A549 (cell line): ENCODE measurements at regions of chr19 and their contacts with region 1.

Region 1: DNA sequence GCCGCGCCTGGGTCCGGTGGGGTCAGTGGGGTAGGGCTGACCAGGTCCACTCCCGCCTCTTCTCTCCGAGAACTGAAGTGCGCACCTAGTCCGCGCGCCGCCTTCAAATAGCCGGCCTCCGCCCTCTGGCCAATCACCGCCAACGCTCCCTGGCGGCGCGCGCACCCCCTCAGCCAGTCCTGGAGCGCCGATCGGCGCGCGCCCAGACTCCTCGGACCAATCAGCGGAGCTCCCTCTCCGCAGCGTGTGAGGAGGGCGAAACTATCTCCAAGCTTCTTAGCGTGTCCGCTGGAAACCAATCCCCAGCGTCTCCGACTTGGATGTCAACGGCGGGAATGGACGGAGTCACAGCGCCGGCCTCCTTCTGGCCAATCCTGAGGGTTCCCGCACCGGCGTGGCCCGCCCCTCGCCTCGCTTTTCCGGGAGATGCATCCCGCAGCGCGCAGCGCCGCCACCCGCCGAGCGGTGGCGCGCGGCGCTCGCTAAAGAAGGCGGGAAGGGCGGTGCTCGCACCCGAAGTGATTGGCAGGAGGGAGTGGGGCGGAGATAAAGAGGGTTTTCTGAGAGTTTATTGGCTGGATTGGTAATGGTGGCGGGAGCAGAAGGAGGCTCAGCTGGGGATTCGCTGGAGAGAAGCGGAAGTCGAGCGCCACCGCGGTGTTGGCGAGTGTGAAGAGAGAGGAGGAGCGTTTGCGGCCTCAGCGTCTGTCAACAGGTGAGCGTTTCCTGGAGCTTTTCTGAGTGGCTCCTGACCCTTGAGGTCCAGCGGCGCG is at the start of gene ASF1B:
- DNase-seq: peak; percentile 94 to 99
- ATAC-seq: peak; percentile 94 to 95
- H3K4me3 ChIP-seq: peak within 1 kb of the TSS; percentile 62
- H3K27ac ChIP-seq: peak within 1 kb of the TSS; percentile 75 to 93
- H3K4me1 ChIP-seq: peaks cover 11% of the 10 kb centered on the region; the same call in 2 of the 3 replicates
- CTCF ChIP-seq: peak; percentile 63
- EP300 ChIP-seq: no peak
- POLR2A ChIP-seq: peak; percentile 81
- RAD21 ChIP-seq: peak; percentile 54 to 81
- polyA plus RNA-seq, gene ASF1B: 12.1 and 17.1 TPM in 2 replicates

Region 2: GRCh38 chr19:13917888-13918406 is 218.7 kb before region 1 on chr19:
- CTCF ChIA-PET with region 1: no interaction called
- POLR2A ChIA-PET with region 1: no interaction called
- DNase-seq: no peak
- ATAC-seq: no peak
- H3K4me3 ChIP-seq: no peak overlapping the region
- H3K27ac ChIP-seq: no peak overlapping the region
- H3K4me1 ChIP-seq: no peaks in the 10 kb centered on the region
- CTCF ChIP-seq: no peak
- EP300 ChIP-seq: no peak
- POLR2A ChIP-seq: no peak
- RAD21 ChIP-seq: no peak

Region 3: GRCh38 chr19:14118165-14119051 is 18.3 kb before region 1 on chr19:
- CTCF ChIA-PET with region 1: interaction called, 18 read pairs
- POLR2A ChIA-PET with region 1: interaction called, 8 read pairs
- DNase-seq: no peak
- ATAC-seq: peak in 1 of 2 experiments; percentile 2; a peak in 3 of 6 replicates
- H3K4me3 ChIP-seq: peak overlapping the region; percentile 50
- H3K27ac ChIP-seq: peak overlapping the region; percentile 92 to 96
- H3K4me1 ChIP-seq: peaks cover 19% of the 10 kb centered on the region
- CTCF ChIP-seq: no peak
- EP300 ChIP-seq: no peak
- POLR2A ChIP-seq: no peak
- RAD21 ChIP-seq: no peak

Region 4: DNA sequence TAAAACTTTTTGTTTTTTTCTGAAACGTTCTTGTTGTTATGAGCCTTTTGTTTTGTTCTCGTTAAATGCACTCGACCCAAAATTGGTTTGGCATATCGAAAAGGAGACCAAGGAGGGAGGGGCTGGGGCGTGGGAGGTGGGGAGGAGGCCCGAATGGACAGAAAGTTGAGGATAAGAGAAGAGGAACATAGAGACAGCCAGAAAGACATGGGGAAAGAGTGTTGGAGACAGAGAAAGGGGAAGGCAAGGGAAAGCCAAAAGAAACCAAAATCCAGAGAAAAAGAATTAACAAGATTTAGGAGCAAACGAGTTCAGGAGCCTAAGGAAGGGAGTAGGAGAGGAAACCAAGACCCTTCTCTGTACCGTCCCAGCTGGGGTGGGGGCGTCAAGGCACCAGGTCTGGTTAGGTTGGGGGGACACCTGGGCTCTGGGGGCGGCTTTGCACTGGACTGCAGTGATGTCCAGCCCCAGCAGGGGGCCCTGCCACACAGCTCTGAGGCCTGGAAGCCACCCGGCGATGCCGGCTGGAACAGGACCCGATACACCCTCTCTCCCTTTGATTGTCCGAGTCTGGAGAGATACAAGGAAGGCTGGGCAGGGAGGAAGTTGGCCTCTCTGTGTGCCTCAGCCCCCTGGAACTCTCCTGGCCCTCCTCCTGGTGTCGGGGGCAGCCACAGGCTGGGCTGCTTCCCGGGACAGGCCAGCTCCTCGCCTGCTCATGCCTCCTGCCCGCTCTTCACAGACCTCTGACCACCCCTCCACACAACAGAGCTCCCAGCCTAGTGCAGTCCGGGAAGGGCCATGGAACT is 11.3 kb after region 1 on chr19:
- CTCF ChIA-PET with region 1: interaction called, 20 read pairs
- POLR2A ChIA-PET with region 1: interaction called, 4 read pairs
- DNase-seq: peak; percentile 45 to 73
- ATAC-seq: peak; percentile 86 to 95
- H3K4me3 ChIP-seq: no peak overlapping the region
- H3K27ac ChIP-seq: peak overlapping the region in 1 of 2 experiments; percentile 57; a peak in 2 of 6 replicates
- H3K4me1 ChIP-seq: no peaks in the 10 kb centered on the region
- CTCF ChIP-seq: peak; percentile 49; the same call in 2 of the 3 replicates
- EP300 ChIP-seq: no peak
- POLR2A ChIP-seq: no peak
- RAD21 ChIP-seq: peak; percentile 53 to 58

Region 5: DNA sequence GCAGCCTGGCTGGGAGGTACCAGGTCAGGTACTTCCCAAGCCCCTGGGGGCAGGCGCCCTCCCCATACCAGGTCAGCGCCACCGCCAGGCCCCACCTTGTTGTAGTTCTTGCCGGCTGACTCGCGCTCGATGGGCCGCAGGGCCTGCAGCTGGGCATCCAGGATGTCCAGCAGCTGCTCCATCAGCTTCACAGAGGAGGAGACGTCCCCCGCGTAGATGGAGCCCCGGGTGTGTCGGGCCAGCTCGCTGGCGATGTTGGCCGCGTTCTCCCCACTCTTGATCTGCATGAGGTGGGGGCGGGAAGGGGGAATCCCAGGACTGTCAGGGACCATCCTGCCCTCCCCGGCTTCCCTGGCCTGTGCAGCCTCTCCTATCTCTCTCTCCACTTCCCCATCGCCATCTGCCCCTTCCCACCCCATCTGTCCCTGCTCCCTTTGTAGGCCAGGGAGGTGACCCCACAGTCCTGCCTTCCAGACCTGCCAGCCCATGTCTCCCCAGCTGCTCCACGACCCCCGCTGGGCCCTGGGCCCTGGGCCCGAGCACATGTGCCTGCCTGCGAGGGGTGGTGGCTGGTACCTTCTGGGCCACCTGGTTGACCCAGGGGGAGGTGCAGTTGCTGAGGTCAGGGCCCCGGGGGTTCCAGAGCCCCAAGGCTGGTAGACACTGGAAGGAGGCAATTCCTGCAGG is 23.5 kb after region 1 on chr19:
- CTCF ChIA-PET with region 1: interaction called, 17 read pairs
- POLR2A ChIA-PET with region 1: no interaction called
- DNase-seq: no peak
- ATAC-seq: no peak
- H3K4me3 ChIP-seq: no peak overlapping the region
- H3K27ac ChIP-seq: no peak overlapping the region
- H3K4me1 ChIP-seq: no peaks in the 10 kb centered on the region
- CTCF ChIP-seq: no peak
- EP300 ChIP-seq: no peak
- POLR2A ChIP-seq: no peak
- RAD21 ChIP-seq: no peak

Region 6: GRCh38 chr19:14405758-14406644 is 269.3 kb after region 1 on chr19:
- CTCF ChIA-PET with region 1: interaction called, 22 read pairs
- POLR2A ChIA-PET with region 1: no interaction called
- DNase-seq: peak; percentile 71 to 88
- ATAC-seq: peak; percentile 47 to 75
- H3K4me3 ChIP-seq: no peak overlapping the region
- H3K27ac ChIP-seq: peak overlapping the region in 1 of 2 experiments; percentile 56; a peak in 1 of 6 replicates
- H3K4me1 ChIP-seq: no peaks in the 10 kb centered on the region
- CTCF ChIP-seq: peak; percentile 60
- EP300 ChIP-seq: no peak
- POLR2A ChIP-seq: no peak
- RAD21 ChIP-seq: peak; percentile 64 to 70

Region 7: DNA sequence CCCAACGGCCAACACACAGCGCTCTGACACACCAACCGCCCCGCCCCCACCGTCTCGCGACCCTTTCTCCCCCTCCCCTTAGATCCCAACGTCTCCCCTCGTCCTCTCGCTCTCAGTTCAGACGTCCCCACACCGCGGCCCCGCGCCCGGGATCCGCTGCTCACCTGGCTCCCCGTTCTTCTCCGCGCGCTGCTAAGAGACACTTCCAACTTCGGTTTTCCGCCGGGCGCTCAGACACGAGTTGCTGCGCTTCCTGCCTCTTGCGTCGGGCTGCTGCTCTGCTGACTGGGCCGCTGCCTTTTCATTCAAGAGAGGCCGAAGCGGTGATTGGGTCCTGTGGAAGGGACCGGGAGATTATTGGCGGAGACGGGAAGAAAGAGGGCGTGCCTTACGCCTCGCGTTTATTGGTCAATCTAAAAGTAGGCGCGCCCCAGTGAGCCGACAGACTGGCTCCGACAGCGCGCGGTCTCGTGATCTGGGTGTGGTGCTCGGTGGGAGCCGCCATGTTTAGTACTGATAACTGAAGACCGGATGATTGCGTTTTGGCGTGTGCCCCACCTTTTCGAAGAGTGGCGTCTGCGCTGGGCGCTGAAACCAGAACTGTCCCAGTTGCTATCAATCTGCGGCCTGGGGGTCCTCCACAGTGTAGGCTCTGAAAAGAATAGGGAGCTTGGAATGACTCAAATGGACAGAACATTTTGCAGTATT is 282.6 kb after region 1 on chr19 and contains the start of gene DDX39A:
- CTCF ChIA-PET with region 1: interaction called, 10 read pairs
- POLR2A ChIA-PET with region 1: no interaction called
- DNase-seq: peak; percentile 94 to 99
- ATAC-seq: peak; percentile 98 to 100
- H3K4me3 ChIP-seq: peak within 1 kb of the TSS; percentile 92
- H3K27ac ChIP-seq: peak within 1 kb of the TSS; percentile 93 to 97
- H3K4me1 ChIP-seq: peaks cover 18% of the 10 kb centered on the region
- CTCF ChIP-seq: no peak
- EP300 ChIP-seq: no peak
- POLR2A ChIP-seq: no peak; the same call in 1 of the 2 replicates
- RAD21 ChIP-seq: no peak
- polyA plus RNA-seq, gene DDX39A: 57.9 and 59.0 TPM in 2 replicates